ENCODE measurements at regions of chr3 and their contacts with region 1.

Region 1: DNA sequence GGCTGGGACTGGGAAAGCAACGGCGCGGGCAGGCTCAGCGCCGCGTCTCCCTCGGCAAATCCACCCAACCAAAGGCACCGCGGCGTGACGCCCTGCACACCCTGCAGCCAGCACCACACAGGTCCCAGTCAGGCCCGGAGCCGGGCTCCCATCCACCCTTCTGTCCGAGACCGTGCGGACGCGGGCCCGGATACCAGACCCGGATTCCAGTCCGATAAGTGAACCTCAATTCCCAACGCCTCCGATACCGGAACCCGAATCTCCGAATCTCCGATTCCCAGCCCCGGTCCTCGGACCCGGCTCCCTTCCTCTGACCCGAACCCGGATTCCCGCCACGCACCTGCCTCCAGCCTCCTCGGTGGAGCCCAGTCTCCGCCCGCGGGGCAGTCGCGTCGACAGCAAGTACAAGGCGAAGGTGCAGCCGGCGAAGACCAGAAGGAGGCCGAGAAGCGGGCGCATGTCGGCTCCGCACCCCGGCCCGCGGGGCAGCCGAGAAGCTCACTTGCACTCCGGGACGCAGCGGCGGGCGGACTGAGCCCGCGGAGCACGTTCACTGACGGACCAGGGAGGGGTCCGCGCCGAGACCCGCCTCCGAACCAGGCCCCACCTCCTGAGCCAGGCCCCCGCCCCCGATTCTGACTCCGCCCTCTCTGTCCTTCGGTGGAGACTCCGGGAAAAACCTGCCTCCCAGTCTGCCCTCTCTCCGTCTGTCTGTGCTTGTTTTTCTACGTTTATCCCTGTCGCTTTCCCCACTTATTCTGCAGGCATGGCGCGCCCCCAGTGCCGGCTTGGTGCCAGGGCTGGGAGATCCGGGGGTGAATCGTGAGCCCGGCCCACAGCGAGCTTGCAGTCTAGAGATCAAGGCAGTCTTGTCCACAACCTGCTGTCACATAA is at the start of gene TMEM41A:
- DNase-seq: peak; percentile 97
- H3K4me3 Mint-ChIP-seq: peak within 1 kb of the TSS; percentile 98
- H3K27ac Mint-ChIP-seq: peak within 1 kb of the TSS; percentile 91
- H3K4me1 Mint-ChIP-seq: peaks cover 20% of the 10 kb centered on the region
- H3K27me3 Mint-ChIP-seq: peaks cover 9% of the 10 kb centered on the region
- total RNA-seq, gene TMEM41A: 25.4 and 25.8 TPM in 2 replicates

Region 2: DNA sequence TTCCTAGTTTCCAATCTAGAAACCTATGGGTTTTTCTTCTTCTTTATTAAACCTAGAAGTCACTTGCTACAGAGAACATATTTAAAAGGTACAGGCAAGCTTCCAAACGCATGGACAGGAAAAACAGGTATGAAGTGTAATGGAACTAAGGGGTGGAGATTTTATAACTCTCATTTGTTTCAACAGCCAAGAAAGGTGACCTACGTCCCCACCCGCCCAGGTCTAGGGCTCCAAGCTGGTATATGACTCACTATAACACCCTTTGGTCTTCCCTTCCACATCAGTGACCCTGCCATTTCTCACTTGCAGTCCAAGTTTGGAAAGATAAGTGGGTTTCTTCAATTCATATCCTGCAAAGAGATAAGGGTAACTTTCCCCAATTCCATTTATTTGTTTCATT is 59.6 kb after region 1 on chr3:
- intact Hi-C with region 1: loop called (anchors 2 kb)
- DNase-seq: no peak
- H3K4me3 Mint-ChIP-seq: no peak overlapping the region
- H3K27ac Mint-ChIP-seq: no peak overlapping the region
- H3K4me1 Mint-ChIP-seq: peaks cover 13% of the 10 kb centered on the region
- H3K27me3 Mint-ChIP-seq: peaks cover 2% of the 10 kb centered on the region

Region 3: GRCh38 chr3:185585859-185586685 is 87.3 kb after region 1 on chr3 and contains the start of gene SENP2:
- intact Hi-C with region 1: loop called (anchors 1 kb)
- DNase-seq: peak; percentile 100
- H3K4me3 Mint-ChIP-seq: peak within 1 kb of the TSS; percentile 80
- H3K27ac Mint-ChIP-seq: peak within 1 kb of the TSS; percentile 90
- H3K4me1 Mint-ChIP-seq: peaks cover 21% of the 10 kb centered on the region
- H3K27me3 Mint-ChIP-seq: peaks cover 3% of the 10 kb centered on the region
- total RNA-seq, gene SENP2: 37.8 and 41.9 TPM in 2 replicates

Region 4: GRCh38 chr3:185724761-185725160 is 226.0 kb after region 1 on chr3:
- intact Hi-C with region 1: no loop called
- DNase-seq: no peak
- H3K4me3 Mint-ChIP-seq: no peak overlapping the region
- H3K27ac Mint-ChIP-seq: no peak overlapping the region
- H3K4me1 Mint-ChIP-seq: no peaks in the 10 kb centered on the region
- H3K27me3 Mint-ChIP-seq: peaks cover 6% of the 10 kb centered on the region

Region 5: GRCh38 chr3:186057594-186057993 is 558.8 kb after region 1 on chr3:
- intact Hi-C with region 1: no loop called
- DNase-seq: no peak
- H3K4me3 Mint-ChIP-seq: no peak overlapping the region
- H3K27ac Mint-ChIP-seq: no peak overlapping the region
- H3K4me1 Mint-ChIP-seq: peaks cover 10% of the 10 kb centered on the region
- H3K27me3 Mint-ChIP-seq: peaks cover 61% of the 10 kb centered on the region